Activated CD4-positive, alpha-beta T cell treated with anti-CD3 and anti-CD28 coated beads, Interleukin-2, amount 10 ng/mL, durations not matched to agents 7 days and 5 days (primary cell): ENCODE measurements at regions of chr5 and their contacts with region 1.

Region 1: GRCh38 chr5:169805527-169805934 is 168.5 kb downstream of the DOCK2 start:
- DNase-seq: peak; percentile 16
- H3K4me3 Mint-ChIP-seq: no peak overlapping the region
- H3K27ac Mint-ChIP-seq: peak overlapping the region; percentile 71
- H3K4me1 Mint-ChIP-seq: peaks cover 32% of the 10 kb centered on the region
- H3K27me3 Mint-ChIP-seq: no peaks in the 10 kb centered on the region

Region 2: DNA sequence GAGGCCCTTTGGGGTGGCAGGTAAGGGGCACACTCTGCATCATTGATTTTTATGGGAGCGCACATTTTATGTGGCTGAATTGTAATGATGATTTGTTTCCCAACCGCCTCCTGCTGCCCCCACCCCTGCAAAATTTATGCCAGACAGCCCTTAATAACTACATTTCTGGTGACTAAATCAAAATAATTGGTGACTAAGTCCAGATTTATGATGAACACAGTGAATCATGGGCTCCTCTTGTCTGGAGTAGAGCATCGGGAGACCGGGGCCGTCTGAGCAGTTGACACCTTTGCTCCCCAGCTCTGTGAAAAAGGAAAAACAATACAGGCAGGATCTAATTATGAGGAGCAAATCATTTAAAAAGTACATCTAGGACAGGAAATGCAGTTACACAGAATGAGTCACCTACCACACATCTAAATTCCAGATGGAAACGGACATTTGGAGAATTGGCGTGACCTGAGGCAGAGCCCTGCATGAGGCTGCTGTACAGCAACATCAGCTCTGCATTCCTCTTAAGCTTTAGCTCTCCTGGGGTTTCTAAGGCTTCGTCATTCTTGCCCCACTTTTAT is 109.5 kb before region 1 on chr5:
- CTCF ChIA-PET with region 1: no interaction called
- POLR2A ChIA-PET with region 1: no interaction called
- DNase-seq: no peak
- H3K4me3 Mint-ChIP-seq: no peak overlapping the region
- H3K27ac Mint-ChIP-seq: no peak overlapping the region
- H3K4me1 Mint-ChIP-seq: peaks cover 1% of the 10 kb centered on the region
- H3K27me3 Mint-ChIP-seq: no peaks in the 10 kb centered on the region

Region 3: DNA sequence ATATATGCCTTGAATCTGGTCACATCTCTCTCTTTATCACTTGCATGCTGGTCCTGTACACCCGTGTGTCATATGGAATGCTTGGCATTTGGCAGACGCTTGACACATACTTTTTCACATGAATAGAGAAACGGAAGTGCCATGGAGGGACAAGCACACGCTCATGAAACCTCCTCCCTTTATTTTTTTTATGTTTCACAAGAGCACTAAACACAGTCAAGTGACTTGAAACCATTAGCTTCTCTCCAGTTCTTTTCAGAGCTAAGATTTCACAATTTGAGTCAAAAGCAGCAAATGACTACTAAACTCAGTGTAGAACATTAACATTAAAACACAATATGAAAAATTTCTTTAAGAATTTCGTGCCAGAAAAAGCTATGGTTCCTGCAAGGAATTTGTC is 17.4 kb before region 1 on chr5:
- CTCF ChIA-PET with region 1: interaction called, 10 read pairs
- POLR2A ChIA-PET with region 1: no interaction called
- DNase-seq: no peak
- H3K4me3 Mint-ChIP-seq: no peak overlapping the region
- H3K27ac Mint-ChIP-seq: no peak overlapping the region
- H3K4me1 Mint-ChIP-seq: no peaks in the 10 kb centered on the region
- H3K27me3 Mint-ChIP-seq: no peaks in the 10 kb centered on the region

Region 4: GRCh38 chr5:169826618-169827017 is 21.1 kb after region 1 on chr5:
- CTCF ChIA-PET with region 1: interaction called, 11 read pairs
- POLR2A ChIA-PET with region 1: no interaction called
- DNase-seq: no peak
- H3K4me3 Mint-ChIP-seq: no peak overlapping the region
- H3K27ac Mint-ChIP-seq: no peak overlapping the region
- H3K4me1 Mint-ChIP-seq: no peaks in the 10 kb centered on the region
- H3K27me3 Mint-ChIP-seq: no peaks in the 10 kb centered on the region

Region 5: DNA sequence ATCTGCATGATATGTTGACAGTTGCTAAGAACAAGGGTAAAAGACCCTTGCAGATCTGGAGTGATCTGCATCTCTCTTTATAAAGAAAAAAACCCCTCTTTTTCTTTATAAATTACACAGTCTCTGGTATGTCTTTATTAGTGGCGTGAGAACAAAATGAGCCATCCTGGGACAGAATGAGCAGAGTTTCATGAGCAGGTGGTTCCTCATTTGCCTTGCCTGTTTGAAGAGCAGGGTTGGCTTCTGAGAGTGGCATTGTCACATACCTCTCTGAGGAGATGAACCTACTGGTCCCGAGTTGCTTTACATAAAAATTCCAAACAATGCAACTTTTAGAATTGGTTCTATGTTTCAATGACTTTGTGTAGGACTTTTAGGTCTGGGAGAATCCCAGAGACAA is 80.5 kb after region 1 on chr5:
- CTCF ChIA-PET with region 1: no interaction called
- POLR2A ChIA-PET with region 1: no interaction called
- DNase-seq: no peak
- H3K4me3 Mint-ChIP-seq: no peak overlapping the region
- H3K27ac Mint-ChIP-seq: no peak overlapping the region
- H3K4me1 Mint-ChIP-seq: no peaks in the 10 kb centered on the region
- H3K27me3 Mint-ChIP-seq: no peaks in the 10 kb centered on the region

Region 6: GRCh38 chr5:169945831-169946261 is 140.3 kb after region 1 on chr5:
- CTCF ChIA-PET with region 1: no interaction called
- POLR2A ChIA-PET with region 1: no interaction called
- DNase-seq: no peak
- H3K4me3 Mint-ChIP-seq: no peak overlapping the region
- H3K27ac Mint-ChIP-seq: no peak overlapping the region
- H3K4me1 Mint-ChIP-seq: peaks cover 5% of the 10 kb centered on the region
- H3K27me3 Mint-ChIP-seq: no peaks in the 10 kb centered on the region